Tibial artery (tissue), 4 donors: ENCODE measurements at regions of chr12 and their contacts with region 1.

Region 1: GRCh38 chr12:106955377-106956047 is at the start of gene TMEM263:
- DNase-seq: peak; percentile 93 to 98
- H3K4me3 ChIP-seq: peak within 1 kb of the TSS; percentile 95 to 97
- H3K27ac ChIP-seq: peak within 1 kb of the TSS; percentile 100
- H3K4me1 ChIP-seq: peaks cover 0 to 46% (median 24%) of the 10 kb centered on the region in 4 donors
- H3K27me3 ChIP-seq: no peaks in the 10 kb centered on the region
- CTCF ChIP-seq: peak in 1 of 2 experiments; percentile 6

Region 2: GRCh38 chr12:106903241-106903945 is 52.1 kb before region 1 on chr12:
- intact Hi-C with region 1: no loop called
- DNase-seq: peak; percentile 52 to 77
- H3K4me3 ChIP-seq: peak overlapping the region; percentile 39 to 55
- H3K27ac ChIP-seq: peak overlapping the region in 1 of 2 donors; percentile 15
- H3K4me1 ChIP-seq: peaks cover 0 to 11% (median 6%) of the 10 kb centered on the region in 4 donors
- H3K27me3 ChIP-seq: peaks cover 0 to 22% of the 10 kb centered on the region in 2 donors
- CTCF ChIP-seq: no peak

Region 3: DNA sequence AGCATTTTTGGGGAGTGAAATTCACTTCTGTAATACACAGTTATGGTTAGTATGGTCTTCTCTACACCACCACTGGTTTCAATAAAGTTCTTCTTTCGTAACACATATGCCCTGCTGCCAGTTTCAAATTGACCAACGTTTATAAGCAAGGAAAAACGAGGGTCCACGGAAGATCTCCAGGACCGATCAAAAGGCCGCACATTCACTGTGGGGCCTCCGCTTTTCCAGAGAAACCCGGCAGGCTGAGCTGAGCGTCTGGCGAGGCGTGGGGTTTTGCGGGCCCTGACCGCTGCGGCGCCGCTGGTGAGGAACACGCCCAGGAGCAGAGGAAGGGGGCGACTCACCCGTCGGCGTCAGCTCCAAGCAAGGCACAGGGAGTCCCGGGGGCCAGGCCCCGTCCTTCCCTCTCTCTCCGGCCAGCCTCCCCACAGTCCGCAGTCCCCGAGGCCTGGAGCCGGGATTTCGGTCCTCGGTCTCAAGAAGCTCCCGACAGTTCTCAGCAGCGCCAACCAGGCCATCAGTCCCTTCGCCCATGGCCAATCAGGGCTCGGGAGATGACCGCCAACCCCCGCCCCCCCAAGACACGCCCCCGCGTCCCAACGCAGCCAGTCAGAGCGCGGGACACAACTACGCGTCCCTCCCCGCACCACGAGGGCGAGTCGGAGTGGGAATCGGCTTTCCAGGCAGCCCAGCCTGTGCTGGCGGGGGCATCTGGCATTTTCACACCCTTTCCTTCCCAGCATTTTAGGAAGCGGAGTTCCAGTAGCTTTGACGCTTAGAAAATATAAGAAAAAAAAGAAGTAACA is 31.3 kb after region 1 on chr12 and contains the start of gene MTERF2:
- intact Hi-C with region 1: loop called (anchors 2 kb)
- DNase-seq: peak; percentile 94 to 97
- H3K4me3 ChIP-seq: peak within 1 kb of the TSS; percentile 69 to 81
- H3K27ac ChIP-seq: peak within 1 kb of the TSS; percentile 93 to 95
- H3K4me1 ChIP-seq: peaks cover 0 to 40% (median 31%) of the 10 kb centered on the region in 4 donors
- H3K27me3 ChIP-seq: no peaks in the 10 kb centered on the region
- CTCF ChIP-seq: no peak

Region 4: DNA sequence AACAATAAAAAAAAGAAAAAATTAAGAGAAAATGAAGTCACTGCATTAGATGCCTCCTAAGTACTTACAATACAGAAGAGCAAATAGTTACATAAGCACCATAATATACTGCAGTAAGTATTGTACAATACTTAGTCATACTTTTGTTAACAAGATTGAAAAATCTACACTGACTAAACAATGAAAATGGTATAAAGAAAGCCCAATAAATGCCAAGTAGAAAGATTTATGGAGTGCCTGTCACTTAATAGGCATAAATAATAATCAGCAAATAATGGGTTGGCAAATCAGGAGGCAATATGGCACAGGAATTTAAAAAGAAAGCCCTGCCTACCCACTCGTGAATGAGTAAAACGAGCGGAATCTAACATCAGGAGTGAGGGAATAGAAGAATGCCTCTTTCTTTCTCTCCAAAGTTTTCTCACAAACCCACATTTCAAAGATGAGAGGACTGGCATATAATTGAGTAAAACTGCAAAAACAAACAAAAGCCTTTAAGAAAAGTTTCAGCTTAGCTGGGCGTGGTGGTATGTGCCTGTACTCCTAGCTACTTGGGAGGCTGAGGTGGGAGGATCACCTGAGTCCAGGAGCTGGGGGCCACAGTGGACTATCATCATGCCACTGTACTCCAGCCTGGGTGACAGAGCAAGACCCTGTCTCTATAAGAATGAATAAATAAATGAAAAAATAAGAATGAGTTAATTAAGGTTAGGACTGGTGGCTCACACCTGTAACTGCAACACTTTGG is 101.7 kb after region 1 on chr12:
- intact Hi-C with region 1: no loop called
- DNase-seq: no peak
- H3K4me3 ChIP-seq: no peak overlapping the region
- H3K27ac ChIP-seq: no peak overlapping the region
- H3K4me1 ChIP-seq: peaks cover 0 to 13% (median 2%) of the 10 kb centered on the region in 4 donors
- H3K27me3 ChIP-seq: no peaks in the 10 kb centered on the region
- CTCF ChIP-seq: no peak

Region 5: DNA sequence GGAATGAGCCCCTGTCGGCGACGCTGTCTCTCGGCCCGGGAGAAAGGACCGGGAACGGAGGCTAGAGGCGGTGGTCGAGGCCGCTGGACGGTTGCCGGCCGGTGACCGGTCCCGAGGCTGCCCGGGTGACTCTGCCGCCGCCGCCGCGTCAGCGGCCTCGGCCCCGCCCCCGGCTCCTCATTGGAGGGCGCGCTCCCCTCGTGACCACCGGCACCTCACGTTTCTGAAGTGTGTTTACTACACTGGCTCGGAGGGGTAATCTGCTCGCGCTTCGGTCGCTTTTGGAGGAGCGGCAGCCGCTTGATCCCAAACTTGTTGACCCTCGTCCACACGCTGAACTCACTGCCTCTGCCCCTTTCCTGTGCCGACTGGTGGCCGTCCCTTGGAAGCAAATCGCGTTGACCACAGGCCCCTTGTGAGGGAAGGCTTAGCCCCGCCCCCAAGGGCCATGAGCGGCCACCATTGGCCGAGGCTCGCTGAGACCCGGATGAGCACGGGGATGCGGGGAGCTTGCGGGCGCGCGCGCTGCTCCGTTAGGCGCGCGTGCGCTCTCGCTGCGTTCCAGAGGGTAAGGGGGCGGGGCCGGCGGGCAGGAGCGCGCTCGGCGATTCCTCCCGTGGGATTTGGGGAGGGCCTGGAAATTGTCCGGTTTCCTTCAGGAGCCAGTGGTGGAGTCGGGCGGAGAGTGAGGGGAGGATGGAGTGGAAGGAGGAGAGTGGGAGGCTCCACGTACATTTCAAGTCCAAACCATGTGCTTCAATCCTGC is 138.1 kb after region 1 on chr12 and contains the start of gene CRY1:
- intact Hi-C with region 1: loop called (anchors 2 kb)
- DNase-seq: peak; percentile 95 to 97
- H3K4me3 ChIP-seq: peak within 1 kb of the TSS; percentile 69 to 72
- H3K27ac ChIP-seq: peak within 1 kb of the TSS; percentile 88 to 94
- H3K4me1 ChIP-seq: peaks cover 0 to 26% (median 17%) of the 10 kb centered on the region in 4 donors
- H3K27me3 ChIP-seq: no peaks in the 10 kb centered on the region
- CTCF ChIP-seq: no peak